ENCODE measurements at regions of chr10 and their contacts with region 1.

Region 1: GRCh38 chr10:35416619-35417312 is 80.5 kb downstream of the CCNY start:
- DNase-seq: no peak
- ATAC-seq: no peak
- H3K4me3 ChIP-seq: no peak overlapping the region
- H3K27ac ChIP-seq: no peak overlapping the region; the same call in 1 of the 2 replicates
- H3K4me1 ChIP-seq: peaks cover 16% of the 10 kb centered on the region
- H3K27me3 ChIP-seq: no peaks in the 10 kb centered on the region
- CTCF ChIP-seq: no peak

Region 2: GRCh38 chr10:35184527-35185171 is 232.1 kb before region 1 on chr10:
- CTCF ChIA-PET with region 1: no interaction called
- POLR2A ChIA-PET with region 1: no interaction called
- in situ Hi-C with region 1: no loop called
- intact Hi-C with region 1: no loop called
- DNase-seq: no peak
- ATAC-seq: no peak
- H3K4me3 ChIP-seq: no peak overlapping the region
- H3K27ac ChIP-seq: no peak overlapping the region
- H3K4me1 ChIP-seq: 0 out of 2 replicates have a peak, but pooled peaks cover 4% of the 10 kb centered on the region
- H3K27me3 ChIP-seq: no peaks in the 10 kb centered on the region
- CTCF ChIP-seq: no peak

Region 3: DNA sequence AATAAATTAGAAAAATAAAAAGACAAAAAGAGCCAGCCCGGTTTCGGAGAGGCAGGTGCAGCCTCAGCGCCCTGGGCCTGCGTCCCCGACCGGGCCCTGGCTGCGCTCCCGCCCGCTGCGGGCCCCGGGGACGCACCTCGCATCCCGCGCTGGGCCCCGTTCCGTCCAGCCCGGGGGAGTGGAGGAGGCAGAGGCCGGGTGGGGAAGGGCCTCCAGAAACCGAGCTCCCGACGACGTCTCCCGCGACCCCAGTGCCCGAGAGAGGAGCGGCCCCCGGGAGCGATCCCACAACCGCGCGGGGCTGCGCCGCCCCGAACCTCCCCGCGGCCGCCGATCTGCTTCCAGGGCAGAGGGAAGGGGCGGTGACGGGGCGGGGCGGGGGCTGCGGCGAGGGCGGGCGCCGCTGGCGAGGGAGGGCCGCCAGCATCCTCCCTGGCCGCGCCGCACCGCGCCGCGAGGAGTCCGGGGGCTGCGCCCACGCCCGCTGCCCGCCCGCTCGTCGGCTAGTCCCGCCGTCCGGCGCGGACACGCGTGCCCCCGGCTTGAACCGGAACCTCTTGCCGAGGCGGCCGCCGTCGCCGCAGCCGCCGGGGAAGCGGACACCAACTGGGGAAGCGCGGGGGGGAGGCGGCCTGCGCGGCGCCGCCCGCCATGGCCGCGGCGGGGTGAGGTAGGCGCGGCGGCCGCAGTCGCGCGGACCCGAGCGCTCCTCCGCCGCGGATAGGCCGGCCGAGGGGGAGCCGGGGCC is 80.5 kb before region 1 on chr10 and contains the start of gene CCNY:
- CTCF ChIA-PET with region 1: no interaction called
- POLR2A ChIA-PET with region 1: no interaction called
- in situ Hi-C with region 1: no loop called
- intact Hi-C with region 1: loop called (anchors 5 kb)
- DNase-seq: no peak
- ATAC-seq: peak; percentile 94
- H3K4me3 ChIP-seq: peak within 1 kb of the TSS; percentile 83 to 88
- H3K27ac ChIP-seq: peak within 1 kb of the TSS; percentile 62
- H3K4me1 ChIP-seq: peaks cover 35% of the 10 kb centered on the region
- H3K27me3 ChIP-seq: no peaks in the 10 kb centered on the region
- CTCF ChIP-seq: no peak
- total RNA-seq, gene CCNY: 51.9 TPM